ENCODE measurements at regions of chr6 and their contacts with region 1.

Region 1: GRCh38 chr6:14876778-14877613 is 368.9 kb upstream of the JARID2 start:
- DNase-seq: peak; percentile 48
- H3K4me3 Mint-ChIP-seq: peak overlapping the region; percentile 68
- H3K27ac Mint-ChIP-seq: peak overlapping the region; percentile 98
- H3K4me1 Mint-ChIP-seq: peaks cover 75% of the 10 kb centered on the region
- H3K27me3 Mint-ChIP-seq: no peaks in the 10 kb centered on the region

Region 2: GRCh38 chr6:14423330-14423729 is 453.7 kb before region 1 on chr6:
- intact Hi-C with region 1: loop called (anchors 1 kb)
- DNase-seq: no peak
- H3K4me3 Mint-ChIP-seq: no peak overlapping the region
- H3K27ac Mint-ChIP-seq: peak overlapping the region; percentile 26
- H3K4me1 Mint-ChIP-seq: peaks cover 26% of the 10 kb centered on the region
- H3K27me3 Mint-ChIP-seq: no peaks in the 10 kb centered on the region

Region 3: DNA sequence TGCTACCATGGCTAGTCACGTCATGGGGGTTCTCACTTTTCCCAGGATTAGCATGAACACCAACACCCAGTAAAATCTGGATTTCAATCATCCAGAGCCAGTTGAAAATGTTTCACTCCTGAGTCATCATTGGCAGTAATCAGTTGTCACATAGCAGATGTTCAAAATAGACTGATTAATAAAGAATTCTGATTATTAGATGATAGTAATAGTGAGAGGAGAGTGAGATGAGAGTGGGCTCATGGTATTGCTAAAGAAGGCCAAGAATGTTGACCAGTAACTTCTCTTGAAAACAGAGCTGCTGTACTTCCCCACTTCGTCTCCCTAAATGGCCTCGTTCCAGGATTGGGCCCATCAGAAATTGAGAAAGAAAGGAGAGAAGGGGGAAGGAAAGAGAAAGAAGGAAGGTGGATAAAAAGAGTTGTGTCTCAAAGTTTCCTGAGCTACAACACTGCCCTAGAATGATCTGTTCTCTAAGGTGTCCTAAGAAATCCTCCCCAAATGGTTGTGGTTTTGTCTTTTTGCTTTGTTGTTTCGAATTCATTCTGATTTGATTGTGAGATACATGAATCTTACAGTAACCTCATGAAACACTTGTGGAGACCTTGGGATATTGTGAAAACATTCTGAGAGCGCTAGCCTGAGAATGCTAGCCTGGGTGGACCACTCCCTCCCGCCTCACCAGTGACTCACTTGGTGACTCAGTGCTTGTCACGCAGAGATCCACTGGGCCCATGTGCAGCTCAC is 133.4 kb before region 1 on chr6:
- intact Hi-C with region 1: loop called (anchors 1 kb)
- DNase-seq: peak; percentile 59
- H3K4me3 Mint-ChIP-seq: peak overlapping the region; percentile 66
- H3K27ac Mint-ChIP-seq: peak overlapping the region; percentile 94
- H3K4me1 Mint-ChIP-seq: peaks cover 80% of the 10 kb centered on the region
- H3K27me3 Mint-ChIP-seq: no peaks in the 10 kb centered on the region

Region 4: GRCh38 chr6:14889191-14889590 is 12.2 kb after region 1 on chr6:
- intact Hi-C with region 1: no loop called
- DNase-seq: no peak
- H3K4me3 Mint-ChIP-seq: no peak overlapping the region
- H3K27ac Mint-ChIP-seq: no peak overlapping the region
- H3K4me1 Mint-ChIP-seq: peaks cover 5% of the 10 kb centered on the region
- H3K27me3 Mint-ChIP-seq: peaks cover 2% of the 10 kb centered on the region

Region 5: DNA sequence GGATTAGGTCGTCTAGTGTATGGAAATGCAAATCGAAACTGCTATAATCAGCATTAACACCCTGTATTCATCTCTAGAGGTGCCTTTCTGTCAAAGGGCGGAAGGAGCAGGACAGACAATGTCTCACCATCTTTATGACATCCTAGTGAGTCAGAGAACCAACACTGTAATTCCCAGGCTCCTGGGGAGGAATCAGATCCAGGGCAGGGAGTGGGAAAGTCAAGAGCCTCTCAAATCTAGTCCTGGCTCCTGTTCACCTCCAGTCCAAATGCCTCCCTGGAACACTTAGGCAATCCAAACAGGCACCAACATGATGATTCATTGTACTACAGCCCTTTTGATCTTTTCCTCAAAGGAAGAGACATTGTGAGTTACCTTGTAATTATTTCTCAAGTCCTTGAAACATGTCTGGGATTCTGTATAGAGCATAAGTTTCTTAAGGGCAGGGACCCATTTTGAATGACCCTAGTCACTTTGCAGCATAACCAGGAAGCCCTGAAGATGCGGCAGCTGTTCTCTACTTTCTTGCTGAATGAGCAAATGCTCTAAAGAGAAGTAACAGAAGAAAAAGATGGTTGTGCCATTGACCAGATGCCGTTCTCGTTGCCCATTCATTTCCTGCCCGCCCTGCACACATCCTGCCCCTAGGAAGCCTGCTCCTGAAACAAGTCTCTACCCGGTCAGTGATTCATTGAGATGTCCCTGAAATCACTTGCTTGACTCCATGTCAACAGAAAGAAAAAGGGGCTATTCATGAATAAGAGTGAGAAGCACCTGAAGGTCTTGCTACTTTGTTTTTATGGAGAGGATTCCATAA is 256.1 kb after region 1 on chr6:
- intact Hi-C with region 1: loop called (anchors 5 kb)
- DNase-seq: no peak
- H3K4me3 Mint-ChIP-seq: no peak overlapping the region
- H3K27ac Mint-ChIP-seq: no peak overlapping the region
- H3K4me1 Mint-ChIP-seq: peaks cover 54% of the 10 kb centered on the region
- H3K27me3 Mint-ChIP-seq: no peaks in the 10 kb centered on the region

Region 6: GRCh38 chr6:15299430-15300131 is 422.6 kb after region 1 on chr6:
- intact Hi-C with region 1: loop called (anchors 1 kb)
- DNase-seq: no peak
- H3K4me3 Mint-ChIP-seq: peak overlapping the region; percentile 69
- H3K27ac Mint-ChIP-seq: peak overlapping the region; percentile 69
- H3K4me1 Mint-ChIP-seq: peaks cover 82% of the 10 kb centered on the region
- H3K27me3 Mint-ChIP-seq: no peaks in the 10 kb centered on the region

Region 7: DNA sequence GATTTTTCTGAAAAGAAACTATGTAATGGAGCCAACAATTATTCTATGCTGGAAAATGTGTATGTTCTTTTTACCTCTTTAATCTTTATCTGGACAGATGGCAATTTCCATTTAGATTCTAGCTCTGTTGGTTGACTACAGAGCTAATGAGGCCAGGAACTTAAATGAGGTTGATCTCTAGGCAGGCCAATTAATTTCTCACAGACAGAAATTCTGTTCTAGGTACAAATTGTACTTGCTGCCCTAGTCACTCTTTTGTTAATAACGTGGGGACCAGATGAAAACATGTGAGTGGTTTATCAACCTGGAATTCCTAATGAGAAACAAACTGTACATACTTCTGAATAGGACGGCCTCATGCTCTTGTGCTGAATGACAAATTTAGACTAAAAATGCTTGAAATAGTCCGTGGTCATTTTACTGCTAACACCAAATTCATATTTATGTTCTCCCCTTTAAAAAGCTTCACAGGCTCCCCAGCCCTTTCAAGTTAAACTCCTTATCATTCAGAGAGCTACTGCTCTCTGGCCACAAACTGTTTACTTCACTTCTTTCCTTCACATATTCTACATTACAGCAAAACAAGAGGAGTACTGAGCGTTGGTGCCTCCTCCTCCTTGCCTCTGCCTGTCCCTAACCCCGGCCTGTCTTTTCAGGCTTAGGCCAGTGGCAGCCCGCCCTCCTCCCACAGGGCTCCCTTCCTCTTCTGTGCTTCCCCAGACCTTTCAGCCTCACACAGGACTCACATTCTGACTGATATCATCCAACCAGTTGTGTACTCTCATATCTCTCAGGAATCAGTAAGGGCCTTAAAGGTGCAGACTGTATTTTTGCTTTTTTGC is 744.4 kb after region 1 on chr6:
- intact Hi-C with region 1: loop called (anchors 2 kb)
- DNase-seq: no peak
- H3K4me3 Mint-ChIP-seq: no peak overlapping the region
- H3K27ac Mint-ChIP-seq: peak overlapping the region; percentile 16
- H3K4me1 Mint-ChIP-seq: peaks cover 27% of the 10 kb centered on the region
- H3K27me3 Mint-ChIP-seq: peaks cover 2% of the 10 kb centered on the region